Mammary epithelial cell (primary cell): ENCODE measurements at regions of chr7 and their contacts with region 1.

Region 1: DNA sequence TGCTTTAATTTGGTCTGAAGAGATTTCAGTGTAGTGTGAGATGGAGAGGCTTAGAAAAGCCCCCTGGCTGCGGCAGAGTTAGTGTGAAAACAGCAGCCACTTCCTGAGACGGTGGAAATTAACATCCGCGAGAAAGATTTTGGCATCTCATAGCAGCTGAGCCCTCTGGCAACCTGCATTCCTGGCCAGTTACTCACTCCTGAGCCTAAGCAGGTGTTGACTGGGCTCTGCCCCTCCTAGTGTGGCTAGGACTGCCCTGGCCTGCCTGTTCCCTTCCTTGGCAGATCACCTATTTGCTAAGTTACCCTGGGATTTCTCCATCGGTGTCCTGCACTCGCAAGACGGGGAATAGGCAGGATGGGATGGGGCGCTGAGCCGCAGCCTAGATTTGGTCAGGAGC is 57.6 kb upstream of the LMTK2 start:
- DNase-seq: peak; percentile 90
- H3K4me3 ChIP-seq: no peak overlapping the region
- H3K27ac ChIP-seq: peak overlapping the region; percentile 9
- H3K4me1 ChIP-seq: peaks cover 7% of the 10 kb centered on the region
- H3K27me3 ChIP-seq: no peaks in the 10 kb centered on the region
- CTCF ChIP-seq: peak in 1 of 2 donors; percentile 8

Region 2: GRCh38 chr7:98091061-98091460 is 42.0 kb after region 1 on chr7:
- CTCF ChIA-PET with region 1: interaction called, 3 read pairs
- dilution Hi-C with region 1: no loop called
- in situ Hi-C with region 1: no loop called
- intact Hi-C with region 1: loop called (anchors 5 kb)
- DNase-seq: peak; percentile 78
- H3K4me3 ChIP-seq: no peak overlapping the region
- H3K27ac ChIP-seq: no peak overlapping the region
- H3K4me1 ChIP-seq: peaks cover 10% of the 10 kb centered on the region
- H3K27me3 ChIP-seq: no peaks in the 10 kb centered on the region
- CTCF ChIP-seq: no peak

Region 3: DNA sequence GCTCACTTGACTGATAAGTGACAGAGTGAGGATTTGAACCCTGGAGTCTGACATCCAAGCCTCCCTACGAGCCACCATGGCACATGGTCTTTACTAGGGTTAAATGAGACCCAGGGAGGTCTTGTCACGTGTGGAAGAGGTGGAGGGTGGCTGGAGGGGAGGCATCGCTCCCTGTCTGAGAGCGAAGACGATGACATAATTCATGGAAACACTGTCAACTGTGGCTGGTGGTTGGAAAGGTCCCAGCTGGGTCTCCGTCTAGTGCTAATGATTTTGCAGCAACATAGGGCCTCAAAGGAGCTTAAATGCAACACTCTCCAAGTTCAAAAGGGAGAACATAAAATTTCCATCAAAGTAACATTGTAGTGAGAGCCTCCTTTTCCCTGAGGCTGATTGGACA is 451.7 kb after region 1 on chr7:
- CTCF ChIA-PET with region 1: no interaction called
- dilution Hi-C with region 1: no loop called
- in situ Hi-C with region 1: no loop called
- intact Hi-C with region 1: no loop called
- DNase-seq: no peak
- H3K4me3 ChIP-seq: no peak overlapping the region
- H3K27ac ChIP-seq: no peak overlapping the region
- H3K4me1 ChIP-seq: no peaks in the 10 kb centered on the region
- H3K27me3 ChIP-seq: no peaks in the 10 kb centered on the region
- CTCF ChIP-seq: no peak